H1 (cell line): ENCODE measurements at regions of chr6 and their contacts with region 1.

Region 1: DNA sequence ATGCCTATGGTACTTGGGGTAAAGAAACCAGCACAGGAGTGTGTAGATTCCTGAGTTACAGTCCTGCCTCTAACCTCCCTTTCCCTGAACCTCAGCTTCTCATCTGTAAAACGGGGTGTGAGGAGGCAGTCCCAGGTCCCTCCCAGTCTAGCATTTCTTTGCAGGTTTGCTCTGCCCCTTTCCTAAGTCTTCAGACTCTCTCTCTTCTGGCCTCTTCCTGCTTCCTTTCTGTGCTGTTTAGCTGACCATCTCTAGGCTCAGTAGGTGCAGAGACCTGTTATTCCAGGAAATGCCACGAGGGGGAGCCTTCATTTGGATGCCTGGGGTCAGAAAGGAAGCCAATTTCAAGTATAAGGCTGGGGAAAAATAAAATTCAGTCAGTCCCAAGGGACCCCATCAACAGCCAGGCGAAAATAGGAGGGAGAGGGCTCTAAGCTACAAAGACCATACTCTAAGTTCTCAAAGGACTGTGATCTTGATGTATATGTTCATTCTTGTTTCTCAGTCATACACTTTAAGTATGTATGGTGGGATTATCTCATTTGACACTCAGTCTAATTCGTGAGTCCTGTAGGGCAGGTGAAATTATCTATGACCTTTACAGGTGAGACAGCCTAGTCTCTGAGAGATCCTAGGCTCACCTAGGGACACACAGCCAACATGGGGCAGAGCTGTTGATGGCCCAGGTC is 89.1 kb downstream of the NCR2 start:
- DNase-seq: peak in 1 of 2 experiments; percentile 97
- H3K4me3 ChIP-seq: no peak overlapping the region
- H3K27ac ChIP-seq: no peak overlapping the region
- H3K4me1 ChIP-seq: peaks cover 3 to 29% (median 8%) of the 10 kb centered on the region in 4 experiments
- H3K27me3 ChIP-seq: peaks cover 24 to 62% (median 54%) of the 10 kb centered on the region in 4 experiments
- CTCF ChIP-seq: peak; percentile 34 to 88 (median 85)
- EP300 ChIP-seq: no peak
- POLR2A ChIP-seq: no peak
- RAD21 ChIP-seq: peak; percentile 72 to 82

Region 2: DNA sequence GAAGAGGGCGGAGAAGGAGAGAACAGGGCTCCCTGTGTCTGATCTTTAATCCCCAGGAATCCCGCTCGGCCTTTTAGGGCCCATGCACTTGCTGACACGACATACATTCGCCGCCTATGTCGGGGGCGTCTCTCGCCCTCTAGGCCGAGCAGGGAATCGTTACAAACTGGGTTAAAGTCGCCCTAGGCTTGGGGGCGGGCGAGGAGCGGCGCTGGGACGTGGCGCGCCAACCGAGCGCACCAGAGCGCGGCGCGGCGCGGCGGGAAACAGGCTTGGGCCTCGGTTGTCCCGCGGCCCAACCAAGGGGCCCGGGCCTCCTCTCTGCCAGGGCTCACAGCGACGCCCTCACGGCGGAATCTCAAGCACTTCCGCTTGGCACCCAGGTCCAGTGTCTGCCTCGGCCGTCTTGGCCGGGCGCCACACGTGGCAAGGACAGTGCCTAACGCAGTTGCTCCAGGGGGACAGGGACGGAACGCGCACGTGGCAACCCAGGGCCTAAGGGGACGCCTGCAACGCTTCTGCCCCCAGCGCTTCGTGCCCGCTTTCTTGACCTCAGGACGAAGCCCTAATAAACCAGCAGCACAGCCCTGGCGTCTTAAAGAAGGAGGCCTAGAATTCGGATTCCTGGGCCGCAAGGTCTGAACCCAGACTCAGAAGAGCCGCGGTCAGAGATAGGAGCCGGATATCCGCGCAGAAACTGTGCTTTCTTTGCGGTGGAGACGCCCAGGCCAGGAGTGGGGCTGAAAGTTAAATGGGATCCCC is 17.6 kb before region 1 on chr6:
- CTCF ChIA-PET with region 1: interaction called, 28 read pairs
- POLR2A ChIA-PET with region 1: interaction called, 5 read pairs
- DNase-seq: peak in 1 of 2 experiments; percentile 80
- H3K4me3 ChIP-seq: peak overlapping the region; percentile 9 to 52 (median 24); a peak in 5 of 8 replicates
- H3K27ac ChIP-seq: no peak overlapping the region
- H3K4me1 ChIP-seq: peaks cover 4 to 36% (median 21%) of the 10 kb centered on the region in 4 experiments
- H3K27me3 ChIP-seq: peaks cover 68 to 98% (median 90%) of the 10 kb centered on the region in 4 experiments
- CTCF ChIP-seq: no peak
- EP300 ChIP-seq: no peak
- POLR2A ChIP-seq: no peak
- RAD21 ChIP-seq: no peak; a peak in 1 of 4 replicates

Region 3: DNA sequence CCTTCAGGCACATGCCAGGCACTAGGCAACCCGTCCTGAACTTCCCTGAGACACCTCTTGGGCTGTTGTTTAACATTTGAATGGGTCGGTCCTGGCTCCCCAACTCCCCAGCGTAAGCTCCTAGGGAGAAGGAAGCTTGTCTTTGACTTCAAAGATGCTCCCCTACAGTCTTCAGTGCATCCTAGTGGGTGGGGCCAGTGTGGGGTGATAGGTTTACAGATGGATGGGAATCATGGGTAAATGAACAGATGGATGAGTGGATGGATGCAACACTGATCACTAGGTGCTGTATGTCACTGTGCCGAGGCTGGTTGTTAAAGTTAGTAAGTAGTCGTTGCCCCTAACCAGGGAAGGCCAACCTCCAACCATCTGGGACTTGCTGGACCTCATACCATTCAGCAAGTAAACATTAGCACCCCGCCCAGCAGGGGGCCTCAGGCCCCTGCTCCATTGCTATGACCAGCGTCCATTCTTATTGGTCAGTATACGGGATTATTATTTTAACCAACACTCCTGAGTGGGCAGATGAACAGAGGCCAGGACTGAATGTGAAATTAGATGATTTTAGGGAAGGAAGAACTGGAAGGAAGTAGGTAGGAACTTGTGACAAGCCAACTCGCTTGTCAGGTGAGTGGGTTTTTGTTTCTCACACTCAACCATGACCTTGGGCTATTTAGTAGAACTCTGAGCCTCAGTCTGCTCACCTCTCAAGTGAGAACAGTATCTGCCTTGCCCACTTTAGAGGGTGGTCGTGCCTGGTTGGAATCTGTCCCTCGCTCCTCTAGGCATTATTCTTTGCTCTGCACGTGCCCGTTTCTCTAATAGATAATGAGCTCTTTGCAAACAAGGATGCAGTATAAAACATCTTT is 38.8 kb after region 1 on chr6:
- CTCF ChIA-PET with region 1: interaction called, 239 read pairs
- POLR2A ChIA-PET with region 1: interaction called, 3 read pairs
- DNase-seq: no peak
- H3K4me3 ChIP-seq: no peak overlapping the region
- H3K27ac ChIP-seq: no peak overlapping the region
- H3K4me1 ChIP-seq: peaks cover 2 to 18% (median 5%) of the 10 kb centered on the region in 4 experiments; a peak in 5 of 7 replicates
- H3K27me3 ChIP-seq: peaks cover 0 to 35% (median 19%) of the 10 kb centered on the region in 4 experiments; a peak in 6 of 7 replicates
- CTCF ChIP-seq: no peak
- EP300 ChIP-seq: no peak
- POLR2A ChIP-seq: no peak
- RAD21 ChIP-seq: peak in 1 of 2 experiments; percentile 43; a peak in 3 of 4 replicates

Region 4: GRCh38 chr6:41545069-41545702 is 120.7 kb after region 1 on chr6:
- CTCF ChIA-PET with region 1: interaction called, 14 read pairs
- POLR2A ChIA-PET with region 1: interaction called, 3 read pairs
- DNase-seq: no peak
- H3K4me3 ChIP-seq: peak overlapping the region; percentile 64 to 70 (median 64)
- H3K27ac ChIP-seq: no peak overlapping the region
- H3K4me1 ChIP-seq: peaks cover 7 to 31% (median 24%) of the 10 kb centered on the region in 4 experiments
- H3K27me3 ChIP-seq: peaks cover 21 to 58% (median 57%) of the 10 kb centered on the region in 4 experiments
- CTCF ChIP-seq: no peak
- EP300 ChIP-seq: no peak
- POLR2A ChIP-seq: no peak
- RAD21 ChIP-seq: no peak

Region 5: GRCh38 chr6:41675176-41675770 is 250.8 kb after region 1 on chr6:
- CTCF ChIA-PET with region 1: interaction called, 21 read pairs
- POLR2A ChIA-PET with region 1: no interaction called
- DNase-seq: no peak
- H3K4me3 ChIP-seq: no peak overlapping the region
- H3K27ac ChIP-seq: no peak overlapping the region
- H3K4me1 ChIP-seq: peaks cover 0 to 14% (median 10%) of the 10 kb centered on the region in 4 experiments; a peak in 6 of 7 replicates
- H3K27me3 ChIP-seq: peaks cover 0 to 5% (median 3%) of the 10 kb centered on the region in 4 experiments; a peak in 4 of 7 replicates
- CTCF ChIP-seq: no peak
- EP300 ChIP-seq: no peak
- POLR2A ChIP-seq: no peak
- RAD21 ChIP-seq: no peak